H1 (cell line): ENCODE measurements at regions of chr1 and their contacts with region 1.

Region 1: DNA sequence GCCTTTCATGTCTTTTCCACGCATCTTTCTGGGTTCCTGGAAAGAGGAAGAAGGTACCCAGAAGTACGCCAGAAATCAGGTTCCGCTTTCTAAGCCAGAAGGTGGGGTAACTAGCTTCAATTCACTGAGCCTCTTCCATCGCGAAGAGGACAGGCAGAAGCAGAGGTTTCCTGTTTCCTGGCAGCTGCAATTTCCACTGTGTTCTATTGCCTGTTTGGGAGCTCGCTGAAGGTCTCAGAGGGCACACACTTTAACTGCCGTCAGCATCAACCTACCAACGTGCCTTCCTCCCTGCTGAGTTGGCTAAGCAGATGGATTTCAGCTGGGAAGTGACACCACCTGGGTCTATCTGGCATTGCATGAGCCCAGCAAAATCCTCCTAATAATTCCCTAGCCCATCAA is 10.0 kb downstream of the NCF2 start:
- DNase-seq: peak in 1 of 2 experiments; percentile 23
- H3K4me3 ChIP-seq: no peak overlapping the region
- H3K27ac ChIP-seq: no peak overlapping the region
- H3K4me1 ChIP-seq: peaks cover 0 to 7% (median 3%) of the 10 kb centered on the region in 4 experiments; a peak in 5 of 7 replicates
- H3K27me3 ChIP-seq: no peaks in the 10 kb centered on the region
- CTCF ChIP-seq: peak in 1 of 3 experiments; percentile 62; a peak in 2 of 4 replicates
- EP300 ChIP-seq: no peak
- POLR2A ChIP-seq: no peak
- RAD21 ChIP-seq: peak; percentile 51 to 62

Region 2: GRCh38 chr1:183562701-183563100 is 17.6 kb before region 1 on chr1:
- CTCF ChIA-PET with region 1: interaction called, 15 read pairs
- POLR2A ChIA-PET with region 1: interaction called, 6 read pairs
- DNase-seq: no peak
- H3K4me3 ChIP-seq: no peak overlapping the region
- H3K27ac ChIP-seq: no peak overlapping the region
- H3K4me1 ChIP-seq: no peaks in the 10 kb centered on the region
- H3K27me3 ChIP-seq: no peaks in the 10 kb centered on the region
- CTCF ChIP-seq: no peak
- EP300 ChIP-seq: no peak
- POLR2A ChIP-seq: no peak
- RAD21 ChIP-seq: no peak

Region 3: GRCh38 chr1:183568176-183569021 is 11.9 kb before region 1 on chr1:
- CTCF ChIA-PET with region 1: interaction called, 15 read pairs
- POLR2A ChIA-PET with region 1: interaction called, 10 read pairs
- DNase-seq: no peak
- H3K4me3 ChIP-seq: no peak overlapping the region
- H3K27ac ChIP-seq: no peak overlapping the region
- H3K4me1 ChIP-seq: no peaks in the 10 kb centered on the region
- H3K27me3 ChIP-seq: no peaks in the 10 kb centered on the region
- CTCF ChIP-seq: no peak
- EP300 ChIP-seq: no peak
- POLR2A ChIP-seq: no peak
- RAD21 ChIP-seq: no peak